ENCODE measurements at regions of chr3 and their contacts with region 1.

Region 1: GRCh38 chr3:11626084-11626463 is 17.6 kb downstream of the VGLL4 start:
- DNase-seq: peak; percentile 81
- H3K4me3 Mint-ChIP-seq: peak overlapping the region; percentile 57
- H3K27ac Mint-ChIP-seq: peak overlapping the region; percentile 77
- H3K4me1 Mint-ChIP-seq: peaks cover 56% of the 10 kb centered on the region
- H3K27me3 Mint-ChIP-seq: no peaks in the 10 kb centered on the region

Region 2: DNA sequence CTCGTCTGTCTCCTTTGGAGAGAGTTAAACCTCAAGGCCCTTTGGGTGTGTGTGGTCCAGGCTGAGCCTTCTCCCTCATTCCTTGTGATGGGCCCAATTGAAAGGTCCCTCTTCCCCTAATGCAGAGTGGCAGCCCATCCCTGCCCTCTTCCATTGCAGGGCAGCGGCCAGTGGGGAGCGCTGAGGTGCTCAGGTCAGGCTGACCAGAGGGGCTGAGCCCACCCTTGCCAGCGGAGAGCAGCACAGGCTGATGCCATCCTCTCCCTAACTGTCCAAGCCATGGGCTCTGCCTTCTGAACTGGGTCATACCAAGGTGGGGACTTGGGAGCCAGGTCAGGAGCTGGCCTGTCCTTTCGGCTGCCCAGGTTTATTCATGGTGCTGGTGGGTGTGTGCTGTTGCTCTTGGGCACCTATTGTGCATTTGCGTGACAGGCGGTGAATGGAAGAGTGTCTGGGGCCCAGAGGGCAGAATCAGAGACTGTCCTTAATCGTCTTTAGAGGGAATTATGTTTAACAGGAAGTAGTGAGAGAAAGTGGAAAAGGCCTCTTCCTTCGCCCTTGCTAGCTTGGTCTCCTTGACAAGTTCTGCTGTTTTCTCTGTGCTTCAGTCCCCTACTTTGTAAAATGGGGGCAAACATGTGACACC is 79.3 kb before region 1 on chr3:
- intact Hi-C with region 1: loop called (anchors 1 kb)
- DNase-seq: no peak
- H3K4me3 Mint-ChIP-seq: no peak overlapping the region
- H3K27ac Mint-ChIP-seq: no peak overlapping the region
- H3K4me1 Mint-ChIP-seq: peaks cover 2% of the 10 kb centered on the region
- H3K27me3 Mint-ChIP-seq: no peaks in the 10 kb centered on the region

Region 3: GRCh38 chr3:11591391-11592282 is 34.4 kb before region 1 on chr3:
- intact Hi-C with region 1: no loop called
- DNase-seq: no peak
- H3K4me3 Mint-ChIP-seq: no peak overlapping the region
- H3K27ac Mint-ChIP-seq: no peak overlapping the region
- H3K4me1 Mint-ChIP-seq: peaks cover 30% of the 10 kb centered on the region
- H3K27me3 Mint-ChIP-seq: no peaks in the 10 kb centered on the region

Measured in activated CD4-positive, alpha-beta T cell treated with anti-CD3 and anti-CD28 coated beads, Interleukin-2, amount 10 ng/mL, durations not matched to agents 24 days and 14 days (primary cell).